Dendritic cell treated with granulocyte-macrophage colony-stimulating factor and Interleukin-4, amounts not matched to agents 40 ng/mL and 50 ng/mL, for 4 days (primary cell): ENCODE measurements at regions of chr6 and their contacts with region 1.

Region 1: DNA sequence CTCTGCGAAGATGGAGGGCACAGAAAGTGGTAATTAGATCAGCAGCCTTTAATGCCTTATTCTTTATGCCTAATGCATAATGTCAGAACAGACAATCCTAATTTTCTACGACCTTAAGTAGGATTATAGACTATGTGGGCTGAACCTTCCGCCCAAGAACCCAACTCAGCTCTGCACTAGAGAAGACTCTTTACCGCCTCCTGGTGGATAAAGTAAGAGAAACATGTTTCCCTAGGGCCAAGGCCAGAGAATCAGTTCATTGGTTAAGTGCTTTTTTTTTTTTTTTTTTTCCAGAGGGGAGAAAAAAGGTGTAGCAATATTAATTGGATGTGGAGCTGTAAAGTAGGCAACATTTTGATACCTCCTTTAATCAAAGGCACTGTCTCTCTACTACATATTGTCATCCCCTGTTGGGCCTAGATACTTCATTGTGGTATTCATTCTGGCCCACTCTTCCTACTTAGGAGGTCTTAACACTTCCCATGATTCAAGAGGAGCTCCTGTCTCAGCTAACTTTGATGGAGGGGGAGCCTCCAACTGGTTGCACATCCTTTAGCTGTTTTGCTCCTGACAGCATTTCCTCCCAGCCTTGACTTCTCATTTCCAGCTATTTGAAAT is 124.9 kb upstream of the NRN1 start:
- H3K4me3 Mint-ChIP-seq: no peak overlapping the region
- H3K27ac Mint-ChIP-seq: no peak overlapping the region
- H3K4me1 Mint-ChIP-seq: peaks cover 4% of the 10 kb centered on the region
- H3K27me3 Mint-ChIP-seq: peaks cover 9% of the 10 kb centered on the region

Region 2: DNA sequence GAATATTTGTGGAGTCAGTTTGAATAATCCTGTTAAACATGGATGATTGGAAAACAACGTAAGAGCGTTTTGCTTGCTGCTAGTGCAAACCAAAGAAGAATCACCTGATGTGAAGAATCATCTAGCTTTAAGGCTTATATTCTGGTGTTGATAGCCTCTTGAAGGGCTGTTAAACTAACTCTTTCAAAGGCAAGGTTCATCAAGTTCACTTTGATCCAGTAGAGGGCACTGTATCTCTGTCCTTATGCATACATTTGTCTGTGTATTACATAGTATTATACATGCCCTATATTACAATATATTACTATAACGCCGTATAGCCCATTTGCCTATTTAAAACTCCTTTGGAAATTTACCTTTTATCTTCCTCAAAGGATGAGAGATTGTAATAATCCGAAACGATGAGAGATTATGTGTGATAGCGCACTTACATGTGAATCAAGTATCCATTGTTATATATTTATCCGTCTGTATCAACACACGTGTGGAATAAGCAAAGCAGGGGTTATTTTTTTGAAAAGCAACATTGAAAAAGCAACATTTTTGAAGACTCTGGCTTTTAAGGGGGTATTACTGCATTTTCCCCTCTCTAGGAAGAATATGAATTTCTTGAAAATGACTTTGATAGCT is 74.1 kb before region 1 on chr6:
- intact Hi-C with region 1: loop called (anchors 1 kb)
- H3K4me3 Mint-ChIP-seq: no peak overlapping the region
- H3K27ac Mint-ChIP-seq: no peak overlapping the region
- H3K4me1 Mint-ChIP-seq: no peaks in the 10 kb centered on the region
- H3K27me3 Mint-ChIP-seq: peaks cover 49% of the 10 kb centered on the region

Region 3: GRCh38 chr6:6438286-6438685 is 306.7 kb after region 1 on chr6:
- intact Hi-C with region 1: no loop called
- H3K4me3 Mint-ChIP-seq: no peak overlapping the region
- H3K27ac Mint-ChIP-seq: no peak overlapping the region
- H3K4me1 Mint-ChIP-seq: peaks cover 16% of the 10 kb centered on the region
- H3K27me3 Mint-ChIP-seq: no peaks in the 10 kb centered on the region